A673 (cell line): ENCODE measurements at regions of chr3 and their contacts with region 1.

Region 1: DNA sequence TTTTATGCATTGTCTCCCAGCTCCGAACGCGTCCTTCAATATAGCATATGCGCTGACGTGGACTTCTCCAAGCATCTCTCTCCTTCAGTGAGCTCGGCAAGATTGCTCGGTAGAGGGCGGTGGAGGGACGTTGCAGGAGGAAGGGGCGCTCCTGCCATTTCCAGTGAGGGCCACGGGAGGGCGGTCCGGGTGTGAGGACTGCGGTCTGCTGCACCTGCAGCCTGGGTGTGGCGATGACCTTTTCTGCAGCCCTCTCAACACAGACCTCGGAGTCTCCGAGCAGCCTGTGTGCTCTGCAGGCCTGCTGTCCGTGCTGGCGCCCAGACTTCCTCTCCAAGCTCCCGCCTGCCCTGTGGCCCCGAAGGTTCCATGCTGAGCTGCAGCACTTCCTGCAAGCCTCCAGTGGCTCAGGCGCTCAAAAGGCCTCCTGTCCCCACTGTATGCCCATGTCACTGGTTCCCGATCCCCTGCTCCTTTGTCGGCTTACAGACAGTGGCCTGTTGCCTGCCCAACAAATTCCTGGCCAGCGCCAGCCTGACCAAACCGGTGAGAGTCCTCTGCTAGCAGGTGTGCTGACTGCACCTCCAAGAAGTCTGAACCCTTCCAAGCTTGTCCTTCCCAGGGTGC is 8.9 kb upstream of the RTP3 start:
- DNase-seq: peak; percentile 85
- H3K4me3 ChIP-seq: no peak overlapping the region
- H3K27ac ChIP-seq: no peak overlapping the region
- H3K4me1 ChIP-seq: no peaks in the 10 kb centered on the region
- H3K27me3 ChIP-seq: no peaks in the 10 kb centered on the region
- CTCF ChIP-seq: peak; percentile 88

Region 2: DNA sequence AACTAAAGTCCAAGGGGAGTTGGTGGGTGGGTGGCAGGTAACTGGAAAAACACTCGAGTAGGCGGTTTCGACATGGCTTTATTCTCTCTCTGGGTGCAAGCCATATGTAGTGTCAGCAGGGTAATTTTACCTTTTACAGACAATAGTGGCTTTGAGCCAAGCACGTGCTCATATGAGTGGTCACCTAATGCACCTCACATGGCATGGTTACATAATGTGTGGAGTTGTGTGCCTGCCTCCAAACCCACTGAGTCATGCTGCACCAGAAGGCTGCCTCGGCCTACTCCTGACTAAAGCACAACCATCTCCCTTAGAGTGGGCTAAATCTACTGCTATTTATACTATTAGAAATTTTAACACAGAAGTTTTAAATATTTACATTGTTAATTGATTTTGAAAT is 65.3 kb before region 1 on chr3:
- CTCF ChIA-PET with region 1: no interaction called
- POLR2A ChIA-PET with region 1: no interaction called
- intact Hi-C with region 1: no loop called
- DNase-seq: no peak
- H3K4me3 ChIP-seq: no peak overlapping the region
- H3K27ac ChIP-seq: no peak overlapping the region
- H3K4me1 ChIP-seq: no peaks in the 10 kb centered on the region
- H3K27me3 ChIP-seq: no peaks in the 10 kb centered on the region
- CTCF ChIP-seq: no peak

Region 3: GRCh38 chr3:46558184-46559043 is 69.6 kb after region 1 on chr3:
- CTCF ChIA-PET with region 1: interaction called, 17 read pairs
- POLR2A ChIA-PET with region 1: no interaction called
- intact Hi-C with region 1: loop called (anchors 5 kb)
- DNase-seq: peak; percentile 83
- H3K4me3 ChIP-seq: peak overlapping the region; percentile 45
- H3K27ac ChIP-seq: no peak overlapping the region
- H3K4me1 ChIP-seq: no peaks in the 10 kb centered on the region
- H3K27me3 ChIP-seq: no peaks in the 10 kb centered on the region
- CTCF ChIP-seq: peak; percentile 56

Region 4: GRCh38 chr3:46629551-46630517 is 141.0 kb after region 1 on chr3:
- CTCF ChIA-PET with region 1: interaction called, 31 read pairs
- POLR2A ChIA-PET with region 1: no interaction called
- intact Hi-C with region 1: loop called (anchors 2 kb)
- DNase-seq: peak; percentile 81
- H3K4me3 ChIP-seq: no peak overlapping the region
- H3K27ac ChIP-seq: no peak overlapping the region
- H3K4me1 ChIP-seq: no peaks in the 10 kb centered on the region
- H3K27me3 ChIP-seq: no peaks in the 10 kb centered on the region
- CTCF ChIP-seq: peak; percentile 86